Right cardiac atrium (tissue), 5 donors: ENCODE measurements at regions of chr3 and their contacts with region 1.

Region 1: DNA sequence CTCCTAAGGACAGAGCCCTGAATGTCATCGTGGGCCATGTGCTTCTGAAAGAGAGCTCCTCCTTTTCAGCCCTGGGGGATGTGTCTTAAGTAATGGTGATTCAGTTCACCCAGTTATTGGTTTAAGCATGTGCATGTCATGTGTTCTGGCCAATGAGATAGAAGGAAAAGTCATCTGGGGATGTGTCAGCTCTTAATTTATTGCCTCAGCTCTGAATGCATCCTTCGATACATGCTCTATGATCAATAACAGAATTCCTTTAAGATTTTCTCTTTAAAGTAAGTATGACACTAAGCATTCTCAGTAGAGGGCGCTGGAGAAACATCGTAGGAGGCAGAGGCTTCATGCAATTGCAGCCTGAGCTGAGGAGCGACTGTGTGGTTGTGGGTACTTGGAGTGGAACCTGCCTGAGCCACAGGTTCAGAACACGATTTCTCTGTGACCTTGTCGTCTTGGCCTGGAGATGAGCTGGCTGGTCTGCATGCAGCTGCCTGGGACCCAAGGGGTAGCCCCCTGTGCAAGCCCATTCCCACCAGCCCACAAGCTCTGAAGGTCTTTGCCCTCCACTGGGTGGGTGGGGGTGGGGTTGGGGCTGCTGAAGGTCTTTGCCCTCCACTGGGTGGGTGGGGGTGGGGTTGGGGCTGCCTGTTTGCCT is 69.5 kb downstream of the C3orf38 start:
- DNase-seq: peak in 2 of 3 donors; percentile 9 to 39
- ATAC-seq: peak; percentile 35 to 59
- H3K4me3 ChIP-seq: no peak overlapping the region
- H3K27ac ChIP-seq: no peak overlapping the region
- H3K4me1 ChIP-seq: no peaks in the 10 kb centered on the region
- H3K27me3 ChIP-seq: no peaks in the 10 kb centered on the region

Region 2: GRCh38 chr3:87873136-87873535 is 346.1 kb before region 1 on chr3:
- intact Hi-C with region 1: no loop called
- DNase-seq: no peak
- ATAC-seq: no peak
- H3K4me3 ChIP-seq: no peak overlapping the region
- H3K27ac ChIP-seq: no peak overlapping the region
- H3K4me1 ChIP-seq: no peaks in the 10 kb centered on the region
- H3K27me3 ChIP-seq: no peaks in the 10 kb centered on the region

Region 3: GRCh38 chr3:88343259-88343658 is 124.0 kb after region 1 on chr3:
- intact Hi-C with region 1: no loop called
- DNase-seq: no peak
- ATAC-seq: no peak
- H3K4me3 ChIP-seq: no peak overlapping the region
- H3K27ac ChIP-seq: no peak overlapping the region
- H3K4me1 ChIP-seq: no peaks in the 10 kb centered on the region
- H3K27me3 ChIP-seq: no peaks in the 10 kb centered on the region

Region 4: GRCh38 chr3:90091204-90091924 is 1872.1 kb after region 1 on chr3:
- intact Hi-C with region 1: loop called in 1 of 4 experiments (anchors 10 kb)
- DNase-seq: peak in 1 of 3 donors; percentile 28
- ATAC-seq: peak in 1 of 2 donors; percentile 62
- H3K4me3 ChIP-seq: no peak overlapping the region
- H3K27ac ChIP-seq: no peak overlapping the region
- H3K4me1 ChIP-seq: no peaks in the 10 kb centered on the region
- H3K27me3 ChIP-seq: no peaks in the 10 kb centered on the region